ENCODE measurements at regions of chr15 and their contacts with region 1.

Region 1: GRCh38 chr15:65275728-65276126 is 11.0 kb downstream of the PARP16 start:
- DNase-seq: no peak
- H3K4me3 ChIP-seq: no peak overlapping the region
- H3K27ac ChIP-seq: no peak overlapping the region
- H3K4me1 ChIP-seq: peaks cover 0 to 5% (median 0%) of the 10 kb centered on the region in 3 donors
- H3K27me3 ChIP-seq: no peaks in the 10 kb centered on the region
- CTCF ChIP-seq: no peak
- POLR2A ChIP-seq: no peak

Region 2: GRCh38 chr15:65054333-65055200 is 221.2 kb before region 1 on chr15:
- intact Hi-C with region 1: loop called (anchors 10 kb)
- DNase-seq: no peak
- H3K4me3 ChIP-seq: no peak overlapping the region
- H3K27ac ChIP-seq: peak overlapping the region; percentile 41 to 80 (median 66)
- H3K4me1 ChIP-seq: peaks cover 13 to 53% (median 26%) of the 10 kb centered on the region in 3 donors
- H3K27me3 ChIP-seq: no peaks in the 10 kb centered on the region
- CTCF ChIP-seq: peak; percentile 67 to 95 (median 89)
- POLR2A ChIP-seq: no peak

Region 3: GRCh38 chr15:65194826-65195547 is 80.7 kb before region 1 on chr15:
- intact Hi-C with region 1: loop called (anchors 5 kb)
- DNase-seq: no peak
- H3K4me3 ChIP-seq: no peak overlapping the region
- H3K27ac ChIP-seq: peak overlapping the region in 3 of 4 donors; percentile 53 to 81 (median 70)
- H3K4me1 ChIP-seq: peaks cover 0 to 29% (median 0%) of the 10 kb centered on the region in 3 donors
- H3K27me3 ChIP-seq: no peaks in the 10 kb centered on the region
- CTCF ChIP-seq: no peak
- POLR2A ChIP-seq: no peak